Transverse colon (tissue), 4 donors: ENCODE measurements at regions of chr19 and their contacts with region 1.

Region 1: GRCh38 chr19:53730390-53730789 is 93.7 kb downstream of the NLRP12 start:
- DNase-seq: no peak
- H3K4me3 ChIP-seq: no peak overlapping the region
- H3K27ac ChIP-seq: no peak overlapping the region
- H3K4me1 ChIP-seq: no peaks in the 10 kb centered on the region
- H3K27me3 ChIP-seq: no peaks in the 10 kb centered on the region
- CTCF ChIP-seq: no peak
- EP300 ChIP-seq: no peak
- POLR2A ChIP-seq: no peak

Region 2: DNA sequence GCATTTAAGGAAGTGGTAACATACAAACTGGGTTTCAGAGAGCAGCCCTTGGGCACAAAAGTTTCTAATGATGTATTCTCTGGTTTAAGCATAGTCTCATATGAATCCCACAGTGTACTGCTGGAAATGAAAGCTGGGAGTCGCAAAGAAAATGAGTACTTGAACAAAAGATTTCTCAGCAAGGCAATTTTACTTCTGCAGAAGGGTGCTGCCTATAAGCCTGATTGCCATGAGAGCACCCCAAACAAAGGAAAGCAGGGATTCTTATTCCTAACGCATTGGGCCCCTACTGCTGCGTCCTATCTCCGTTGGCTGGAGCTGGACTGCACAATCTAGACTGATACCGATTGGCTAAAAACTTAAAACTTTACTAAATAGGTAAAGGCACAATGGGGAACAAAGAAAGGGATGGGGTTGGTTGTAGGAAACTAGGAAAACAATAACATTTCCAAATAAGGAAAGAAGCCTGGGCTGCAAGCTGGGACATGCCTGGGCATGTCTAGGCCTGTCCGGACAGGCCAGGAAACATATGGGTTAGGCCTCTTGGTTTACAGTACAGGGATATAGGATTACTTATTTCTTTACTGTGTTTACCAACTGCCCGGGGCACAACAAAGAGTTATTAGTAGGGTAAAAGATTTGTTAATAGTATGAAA is 435.5 kb before region 1 on chr19:
- in situ Hi-C with region 1: no loop called
- intact Hi-C with region 1: no loop called
- DNase-seq: no peak
- H3K4me3 ChIP-seq: no peak overlapping the region
- H3K27ac ChIP-seq: no peak overlapping the region
- H3K4me1 ChIP-seq: no peaks in the 10 kb centered on the region
- H3K27me3 ChIP-seq: no peaks in the 10 kb centered on the region
- CTCF ChIP-seq: no peak
- EP300 ChIP-seq: no peak
- POLR2A ChIP-seq: no peak

Region 3: DNA sequence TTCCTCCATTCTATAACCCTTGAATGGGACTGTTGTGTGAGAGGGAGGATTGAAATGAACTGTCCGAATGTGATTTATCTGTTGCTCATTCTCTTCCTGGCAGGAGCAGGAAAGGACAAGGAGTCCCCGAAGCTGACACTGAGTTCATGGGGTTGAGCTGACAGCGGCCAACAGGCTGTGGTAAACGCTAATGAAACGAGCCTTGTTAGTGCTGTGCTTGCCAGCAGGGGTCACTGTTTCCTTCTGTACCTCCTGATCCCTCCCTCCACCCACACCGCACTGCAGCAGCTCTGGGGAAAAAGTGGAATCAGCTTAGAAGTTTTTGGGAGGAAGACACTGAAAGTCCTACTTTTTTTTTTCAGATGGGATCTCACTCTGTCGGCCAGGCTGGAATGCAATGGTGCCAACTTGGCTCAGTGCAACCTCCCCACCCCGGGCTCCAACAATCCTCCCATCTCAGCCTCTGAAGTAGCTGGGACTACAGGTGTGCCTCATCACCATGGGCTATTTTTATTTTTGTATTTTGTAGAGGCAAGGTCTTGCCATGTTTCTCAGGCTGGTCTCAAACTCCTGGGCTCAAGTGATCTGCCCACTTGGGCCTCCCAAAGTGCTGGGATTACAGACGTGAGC is 305.3 kb before region 1 on chr19:
- in situ Hi-C with region 1: loop called in 2 of 4 experiments (anchors 25 kb)
- intact Hi-C with region 1: no loop called
- DNase-seq: peak; percentile 71
- H3K4me3 ChIP-seq: no peak overlapping the region
- H3K27ac ChIP-seq: no peak overlapping the region
- H3K4me1 ChIP-seq: no peaks in the 10 kb centered on the region
- H3K27me3 ChIP-seq: no peaks in the 10 kb centered on the region
- CTCF ChIP-seq: peak; percentile 70 to 74 (median 71)
- EP300 ChIP-seq: no peak
- POLR2A ChIP-seq: no peak